ENCODE measurements at regions of chr10 and their contacts with region 1.

Region 1: DNA sequence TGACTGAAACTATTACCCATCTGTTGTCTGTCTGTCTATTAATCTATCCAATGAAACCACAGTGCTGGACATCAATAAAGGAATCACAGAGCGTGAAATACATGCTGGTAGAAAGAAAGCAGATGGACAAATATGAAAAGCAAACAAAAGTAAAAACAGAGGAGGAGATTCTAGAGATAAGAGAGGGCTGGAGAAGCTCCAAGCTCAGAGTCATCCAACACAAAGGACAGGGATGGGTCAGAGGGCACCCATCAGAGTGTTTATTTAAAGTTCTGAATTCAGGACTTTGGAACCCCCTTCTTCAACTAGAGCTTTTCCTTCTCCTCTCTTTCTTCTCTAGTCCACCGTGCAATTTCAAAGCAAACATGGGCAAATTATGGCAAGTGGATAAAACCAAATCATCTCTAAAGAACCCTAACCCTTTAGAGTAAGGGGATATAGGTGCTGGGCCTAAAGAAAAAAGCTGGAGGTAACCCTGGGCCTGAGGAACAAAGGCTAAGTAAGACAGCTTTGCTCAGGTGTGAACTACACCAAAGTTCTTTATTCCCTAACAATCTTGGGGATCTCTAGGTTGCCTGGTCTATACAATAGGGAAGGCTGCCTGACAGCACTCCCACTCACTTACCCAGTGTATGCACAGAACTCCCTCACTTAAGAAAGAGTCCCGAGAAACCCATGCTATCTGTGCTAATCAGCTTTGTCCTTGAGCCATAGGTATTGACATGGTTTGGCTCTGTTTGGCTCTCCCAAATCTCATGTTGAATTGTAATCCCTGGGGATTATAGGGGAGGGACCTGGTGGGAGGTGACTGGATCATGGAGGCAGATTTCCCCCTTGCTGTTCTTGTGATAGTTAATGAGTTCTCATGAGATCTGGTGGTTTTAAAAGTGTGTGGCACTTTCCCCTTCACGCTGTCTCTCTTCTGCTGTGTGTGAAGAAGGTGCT is 97.0 kb downstream of the BAMBI start:
- DNase-seq: no peak
- H3K4me3 ChIP-seq: no peak overlapping the region
- H3K27ac ChIP-seq: no peak overlapping the region
- H3K4me1 ChIP-seq: no peaks in the 10 kb centered on the region
- H3K27me3 ChIP-seq: no peaks in the 10 kb centered on the region
- CTCF ChIP-seq: no peak

Region 2: GRCh38 chr10:28984431-28984830 is 210.1 kb after region 1 on chr10:
- CTCF ChIA-PET with region 1: no interaction called
- POLR2A ChIA-PET with region 1: no interaction called
- intact Hi-C with region 1: no loop called
- DNase-seq: peak; percentile 75 to 77
- H3K4me3 ChIP-seq: no peak overlapping the region
- H3K27ac ChIP-seq: no peak overlapping the region
- H3K4me1 ChIP-seq: peaks cover 14% of the 10 kb centered on the region
- H3K27me3 ChIP-seq: no peaks in the 10 kb centered on the region
- CTCF ChIP-seq: no peak

Region 3: DNA sequence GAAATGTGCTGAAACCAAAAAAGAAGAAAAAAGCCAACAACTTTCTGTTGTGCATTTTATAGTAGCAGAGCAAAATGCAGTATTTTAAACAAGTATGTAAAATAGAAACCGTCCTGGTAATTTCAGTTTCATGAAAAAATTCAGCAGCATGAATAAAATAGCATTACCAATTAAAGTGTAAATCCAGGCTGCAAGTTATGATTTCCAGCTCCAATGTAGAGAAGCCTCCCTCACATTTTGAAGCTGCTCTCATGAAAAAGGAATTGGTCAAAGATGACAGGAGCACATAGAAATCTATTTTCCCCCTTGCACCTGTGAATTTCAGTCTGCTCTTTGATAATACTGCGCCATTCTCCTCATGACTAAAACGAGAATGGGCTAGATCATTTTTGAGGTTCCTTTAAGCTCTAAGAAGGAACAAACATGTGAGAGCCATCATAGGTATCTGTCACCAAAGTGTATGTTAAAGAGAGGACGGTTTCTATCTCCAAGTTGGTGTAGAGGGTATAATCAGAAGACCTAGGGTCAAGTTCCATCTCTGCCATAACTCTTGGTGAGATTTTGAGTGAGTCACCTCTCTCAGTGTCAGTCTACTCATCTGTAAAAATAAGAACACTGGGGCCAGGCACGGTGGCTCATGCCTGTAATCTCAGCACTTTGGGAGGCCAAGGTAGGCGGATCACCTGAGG is 1467.2 kb after region 1 on chr10:
- CTCF ChIA-PET with region 1: interaction called, 10 read pairs
- POLR2A ChIA-PET with region 1: no interaction called
- intact Hi-C with region 1: no loop called
- DNase-seq: no peak
- H3K4me3 ChIP-seq: no peak overlapping the region
- H3K27ac ChIP-seq: no peak overlapping the region
- H3K4me1 ChIP-seq: no peaks in the 10 kb centered on the region
- H3K27me3 ChIP-seq: no peaks in the 10 kb centered on the region
- CTCF ChIP-seq: no peak; the same call in 1 of the 2 replicates

Measured in PC-9 (cell line).